ENCODE measurements at regions of chr3 and their contacts with region 1.

Region 1: DNA sequence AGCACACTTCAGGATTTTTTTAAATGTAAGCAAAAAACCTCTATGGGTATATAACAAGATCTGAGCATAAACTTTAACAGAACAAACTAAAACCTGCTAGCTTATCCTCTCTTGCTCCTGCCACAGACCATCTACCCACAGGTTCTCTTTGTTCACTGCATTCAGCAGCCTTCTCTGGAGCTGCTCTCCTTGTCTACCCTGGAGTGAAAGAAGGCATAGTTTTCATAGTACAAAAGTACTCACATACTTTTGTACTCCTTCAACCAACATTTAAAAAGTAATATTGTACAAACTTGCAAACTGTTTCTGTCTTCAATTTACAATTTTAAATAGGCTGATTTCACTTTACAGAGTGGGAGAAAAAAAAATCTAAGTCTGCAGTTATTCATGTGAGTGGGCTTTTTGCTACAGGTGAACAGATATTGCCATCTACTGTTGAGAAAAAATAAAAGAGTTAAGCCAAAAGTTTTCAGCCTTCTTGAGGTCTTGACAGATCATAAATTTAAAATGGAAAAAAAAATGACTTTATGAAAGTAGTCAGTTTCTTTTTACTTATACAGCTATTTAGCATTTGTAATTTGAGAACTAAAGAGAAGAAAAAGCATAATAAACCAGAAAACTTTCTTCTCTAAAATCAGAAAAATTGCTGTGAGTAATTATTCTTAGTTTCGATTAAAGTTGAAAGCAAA is 20.4 kb downstream of the TERC start:
- DNase-seq: no peak
- ATAC-seq: no peak
- H3K4me3 ChIP-seq: no peak overlapping the region
- H3K27ac ChIP-seq: no peak overlapping the region
- H3K4me1 ChIP-seq: no peaks in the 10 kb centered on the region
- H3K27me3 ChIP-seq: peaks cover 34% of the 10 kb centered on the region
- CTCF ChIP-seq: peak; percentile 55; the same call in 1 of the 2 replicates

Region 2: GRCh38 chr3:169133178-169134161 is 611.0 kb before region 1 on chr3:
- CTCF ChIA-PET with region 1: no interaction called
- POLR2A ChIA-PET with region 1: no interaction called
- in situ Hi-C with region 1: no loop called
- intact Hi-C with region 1: loop called (anchors 1 kb)
- DNase-seq: no peak
- ATAC-seq: no peak
- H3K4me3 ChIP-seq: no peak overlapping the region
- H3K27ac ChIP-seq: no peak overlapping the region
- H3K4me1 ChIP-seq: no peaks in the 10 kb centered on the region
- H3K27me3 ChIP-seq: peaks cover 5% of the 10 kb centered on the region
- CTCF ChIP-seq: peak; percentile 49; the same call in 1 of the 2 replicates

Region 3: GRCh38 chr3:169149349-169149890 is 595.1 kb before region 1 on chr3:
- CTCF ChIA-PET with region 1: no interaction called
- POLR2A ChIA-PET with region 1: no interaction called
- in situ Hi-C with region 1: no loop called
- intact Hi-C with region 1: loop called (anchors 5 kb)
- DNase-seq: peak; percentile 41
- ATAC-seq: peak; percentile 96
- H3K4me3 ChIP-seq: peak overlapping the region; percentile 17 to 39
- H3K27ac ChIP-seq: no peak overlapping the region
- H3K4me1 ChIP-seq: peaks cover 22% of the 10 kb centered on the region
- H3K27me3 ChIP-seq: peaks cover 56% of the 10 kb centered on the region
- CTCF ChIP-seq: peak; percentile 94